PC-3 (cell line): ENCODE measurements at regions of chr2 and their contacts with region 1.

Region 1: DNA sequence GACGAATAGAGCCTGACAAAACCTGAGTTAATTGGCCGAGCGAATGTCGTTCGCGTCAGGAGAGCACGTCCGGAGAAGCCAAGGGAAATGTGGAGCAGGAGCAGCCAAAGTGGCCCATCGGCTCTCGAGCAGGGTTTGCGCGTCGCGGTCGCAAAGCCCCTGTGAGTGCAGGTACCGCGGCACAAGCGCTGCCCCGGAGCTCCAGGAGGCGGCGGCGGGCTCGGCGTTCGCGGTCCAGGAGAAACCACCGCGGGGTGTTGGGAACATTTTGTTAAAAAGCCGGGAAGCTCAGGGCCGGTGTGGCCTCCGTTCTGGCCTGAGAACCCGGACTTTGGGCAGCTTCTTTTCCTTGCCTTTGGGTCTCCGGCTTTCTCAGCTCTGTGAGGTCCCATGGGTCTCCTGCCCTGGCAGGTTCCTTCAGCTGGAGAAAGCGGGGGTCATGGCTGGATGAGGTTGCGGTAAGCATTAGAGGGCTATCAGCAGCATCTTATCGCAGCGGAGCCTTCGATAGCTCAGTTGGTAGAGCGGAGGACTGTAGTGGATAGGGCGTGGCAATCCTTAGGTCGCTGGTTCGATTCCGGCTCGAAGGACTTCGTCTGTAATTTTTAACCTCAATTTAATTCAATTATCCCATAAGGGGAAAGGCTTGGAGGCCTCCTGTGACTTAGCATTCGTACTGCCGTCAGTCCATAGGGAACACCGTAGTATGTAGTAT is 1.0 kb upstream of the AGBL5 start:
- DNase-seq: peak; percentile 97
- ATAC-seq: peak; percentile 64
- H3K4me3 ChIP-seq: peak overlapping the region; percentile 77
- H3K27ac ChIP-seq: peak overlapping the region; percentile 52
- H3K4me1 ChIP-seq: peaks cover 17% of the 10 kb centered on the region
- H3K27me3 ChIP-seq: no peaks in the 10 kb centered on the region
- CTCF ChIP-seq: no peak; the same call in 1 of the 2 replicates

Region 2: DNA sequence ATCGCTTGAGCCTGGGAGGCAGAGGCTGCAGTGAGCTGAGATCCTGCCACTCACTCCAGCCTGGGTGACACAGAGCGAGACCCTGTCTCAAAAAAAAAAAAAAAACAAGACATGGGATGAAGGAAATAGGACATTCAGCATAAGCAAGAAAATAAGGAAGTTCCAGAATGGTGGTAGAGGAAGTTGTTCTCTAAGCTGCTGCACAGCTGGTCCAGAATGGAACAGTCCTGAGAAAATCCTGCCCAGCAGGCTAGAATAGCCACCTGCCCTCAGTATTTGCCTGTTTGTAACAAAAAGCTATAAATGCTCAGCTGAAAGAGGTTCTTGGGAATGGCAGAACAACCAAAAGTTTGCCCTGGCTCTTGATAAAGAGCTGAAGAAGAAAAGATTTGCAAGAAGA is 91.1 kb before region 1 on chr2:
- CTCF ChIA-PET with region 1: interaction called, 4 read pairs
- POLR2A ChIA-PET with region 1: no interaction called
- intact Hi-C with region 1: loop called (anchors 1 kb)
- DNase-seq: no peak
- ATAC-seq: no peak
- H3K4me3 ChIP-seq: no peak overlapping the region
- H3K27ac ChIP-seq: no peak overlapping the region
- H3K4me1 ChIP-seq: no peaks in the 10 kb centered on the region
- H3K27me3 ChIP-seq: peaks cover 21% of the 10 kb centered on the region; the same call in 1 of the 2 replicates
- CTCF ChIP-seq: no peak

Region 3: GRCh38 chr2:27032495-27033252 is 17.8 kb before region 1 on chr2 and contains the start of gene TMEM214:
- CTCF ChIA-PET with region 1: no interaction called
- POLR2A ChIA-PET with region 1: interaction called, 4 read pairs
- intact Hi-C with region 1: loop called (anchors 2 kb)
- DNase-seq: peak; percentile 90
- ATAC-seq: peak; percentile 98
- H3K4me3 ChIP-seq: peak within 1 kb of the TSS; percentile 87
- H3K27ac ChIP-seq: no peak within 1 kb of the TSS; the same call in 1 of the 2 replicates
- H3K4me1 ChIP-seq: peaks cover 8% of the 10 kb centered on the region
- H3K27me3 ChIP-seq: no peaks in the 10 kb centered on the region
- CTCF ChIP-seq: no peak
- total RNA-seq, gene TMEM214: 43.0 and 56.1 TPM in 2 replicates

Region 4: DNA sequence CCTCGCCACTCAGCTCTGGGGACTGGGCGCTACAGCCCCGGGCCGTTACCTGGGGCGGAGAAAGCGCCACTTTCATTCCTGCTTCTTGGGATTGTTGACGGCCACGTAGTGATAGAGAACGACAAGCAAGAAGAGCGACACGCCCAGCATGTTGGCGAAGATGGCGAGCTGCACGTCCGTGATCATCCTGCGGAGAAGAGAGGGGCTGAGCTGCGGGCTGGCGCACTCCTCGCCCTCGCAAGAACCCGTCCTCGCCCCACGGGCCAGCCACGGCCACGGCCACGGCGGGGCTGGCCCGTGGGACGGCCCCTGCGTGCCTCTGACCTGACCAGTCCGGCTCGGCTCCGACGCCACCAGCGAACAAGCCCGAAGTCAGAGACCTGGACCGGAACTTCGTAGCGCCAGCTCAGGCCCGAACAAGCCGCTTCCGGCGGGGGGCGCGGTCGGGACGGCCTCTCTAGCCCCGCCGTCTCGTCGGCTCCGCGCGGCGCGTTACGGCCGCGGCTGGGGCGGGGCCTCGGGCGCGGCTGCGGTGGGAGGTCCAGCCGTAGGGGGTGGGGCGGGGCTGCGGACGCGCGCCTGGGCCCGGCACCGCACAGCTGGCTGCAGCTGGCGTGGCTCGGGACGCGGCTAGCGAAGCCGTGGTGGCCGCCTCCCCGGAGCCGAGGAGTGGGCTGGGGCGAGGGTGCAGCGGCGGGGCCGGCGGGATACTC is 21.0 kb after region 1 on chr2 and contains the start of gene OST4:
- CTCF ChIA-PET with region 1: no interaction called
- POLR2A ChIA-PET with region 1: no interaction called
- intact Hi-C with region 1: no loop called
- DNase-seq: peak; percentile 94
- ATAC-seq: peak; percentile 97
- H3K4me3 ChIP-seq: peak within 1 kb of the TSS; percentile 86
- H3K27ac ChIP-seq: peak within 1 kb of the TSS; percentile 30; the same call in 1 of the 2 replicates
- H3K4me1 ChIP-seq: peaks cover 12% of the 10 kb centered on the region
- H3K27me3 ChIP-seq: no peaks in the 10 kb centered on the region
- CTCF ChIP-seq: no peak
- total RNA-seq, gene OST4: 244 and 258 TPM in 2 replicates